Esophagus squamous epithelium (tissue), 5 donors: ENCODE measurements at regions of chr1 and their contacts with region 1.

Region 1: DNA sequence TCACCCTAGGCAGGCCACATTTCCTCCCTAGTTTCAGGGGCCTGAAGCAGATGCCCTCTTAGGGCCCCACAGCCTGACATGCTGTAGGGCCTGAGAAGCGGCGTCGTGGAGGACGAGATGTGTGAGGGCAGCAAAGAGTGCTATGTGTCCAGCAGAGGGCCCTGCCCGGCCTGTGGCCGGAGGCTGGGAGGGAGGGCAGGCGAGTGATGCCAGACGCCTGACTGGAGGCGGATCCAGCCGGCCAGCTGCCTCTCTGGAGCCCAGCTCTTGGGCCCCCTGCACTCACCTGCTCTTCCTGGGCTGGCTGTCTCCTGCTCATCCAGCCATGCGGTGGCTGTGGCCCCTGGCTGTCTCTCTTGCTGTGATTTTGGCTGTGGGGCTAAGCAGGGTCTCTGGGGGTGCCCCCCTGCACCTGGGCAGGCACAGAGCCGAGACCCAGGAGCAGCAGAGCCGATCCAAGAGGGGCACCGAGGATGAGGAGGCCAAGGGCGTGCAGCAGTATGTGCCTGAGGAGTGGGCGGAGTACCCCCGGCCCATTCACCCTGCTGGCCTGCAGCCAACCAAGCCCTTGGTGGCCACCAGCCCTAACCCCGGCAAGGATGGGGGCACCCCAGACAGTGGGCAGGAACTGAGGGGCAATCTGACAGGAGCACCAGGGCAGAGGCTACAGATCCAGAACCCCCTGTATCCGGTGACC is at the start of gene GPR37L1:
- DNase-seq: no peak
- H3K4me3 ChIP-seq: no peak within 1 kb of the TSS
- H3K27ac ChIP-seq: no peak within 1 kb of the TSS
- H3K4me1 ChIP-seq: peaks cover 0 to 11% (median 8%) of the 10 kb centered on the region in 3 donors
- H3K27me3 ChIP-seq: no peaks in the 10 kb centered on the region
- CTCF ChIP-seq: peak in 2 of 6 experiments; percentile 5 to 8
- POLR2A ChIP-seq: no peak
- total RNA-seq, gene GPR37L1: 0.09 TPM in 1 of 4 donors, not detected in the others

Region 2: DNA sequence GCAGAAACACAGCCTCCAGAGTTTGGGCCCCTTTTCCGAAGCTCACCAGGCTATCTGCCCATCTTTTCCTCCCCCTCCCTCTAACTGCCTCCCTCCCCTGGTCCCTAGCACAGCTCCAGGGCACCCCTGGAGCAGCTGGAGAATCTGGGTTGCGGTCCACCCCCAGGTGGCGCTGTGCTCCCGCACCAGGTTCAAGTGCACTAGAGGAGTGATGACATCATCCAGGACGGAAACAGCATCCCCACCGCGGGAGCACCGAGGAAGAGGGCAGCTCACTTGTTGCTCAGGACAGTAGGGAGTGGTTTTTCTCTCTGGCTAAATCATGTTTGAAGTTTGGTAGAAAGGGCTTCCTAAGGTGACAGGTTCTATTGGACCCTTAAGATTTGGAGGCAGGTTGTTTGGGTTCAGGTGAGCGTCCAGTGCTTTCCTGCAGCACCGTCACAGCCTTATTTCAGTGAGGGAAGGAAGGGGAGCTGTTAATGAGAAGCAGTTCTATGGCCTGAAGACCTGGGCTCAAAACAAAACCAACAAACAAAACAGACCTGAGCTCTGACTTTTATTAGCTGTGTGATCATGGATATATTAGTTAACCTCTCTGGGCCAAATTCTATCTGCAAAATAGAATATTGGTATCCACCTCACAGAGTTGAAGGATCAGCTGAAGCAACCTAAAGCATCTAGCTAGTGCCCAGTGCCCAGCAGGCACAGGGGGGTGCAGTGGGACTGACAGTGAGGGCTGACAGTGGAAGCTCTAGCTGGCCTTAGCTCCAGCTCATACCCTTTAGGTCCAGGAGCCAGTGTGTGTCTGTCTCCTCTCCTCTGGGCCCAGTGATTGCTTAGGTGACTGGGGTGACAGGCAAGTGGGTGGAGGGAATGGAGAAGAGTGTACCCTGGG is 226.6 kb before region 1 on chr1:
- intact Hi-C with region 1: loop called (anchors 10 kb)
- DNase-seq: no peak
- H3K4me3 ChIP-seq: no peak overlapping the region
- H3K27ac ChIP-seq: peak overlapping the region; percentile 7 to 85 (median 76)
- H3K4me1 ChIP-seq: peaks cover 0 to 72% (median 0%) of the 10 kb centered on the region in 3 donors
- H3K27me3 ChIP-seq: peaks cover 0 to 2% (median 0%) of the 10 kb centered on the region in 4 donors
- CTCF ChIP-seq: peak; percentile 91 to 97 (median 92)
- POLR2A ChIP-seq: no peak

Region 3: DNA sequence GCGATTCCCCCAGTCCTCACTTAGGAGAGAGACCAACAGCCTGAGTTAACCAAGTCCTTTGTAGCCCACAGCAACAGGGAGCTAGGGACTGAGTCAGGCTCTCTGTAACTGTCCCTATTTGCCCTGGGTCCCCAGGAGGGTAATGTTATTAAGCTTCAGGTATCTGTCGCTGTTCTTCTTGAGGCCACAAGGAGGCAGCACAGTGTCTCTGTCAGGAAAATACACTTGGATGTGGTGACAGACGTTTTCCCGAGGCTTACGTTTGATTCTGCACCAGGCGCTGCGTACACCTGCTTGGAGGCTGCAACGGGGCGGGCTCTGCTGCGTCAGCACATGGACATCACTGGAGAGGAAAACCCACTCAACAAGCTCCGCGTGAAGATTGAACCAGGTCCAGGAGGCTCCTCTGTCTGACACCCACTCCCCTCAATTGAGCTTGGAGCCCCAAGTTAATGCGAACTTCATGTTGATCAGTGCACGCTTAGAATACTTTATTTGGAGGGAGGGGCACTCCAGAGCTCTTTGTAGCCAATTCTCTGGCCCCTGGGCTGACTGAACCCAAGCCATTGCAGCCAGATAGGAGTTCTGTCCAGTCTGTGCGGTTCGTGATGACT is 123.1 kb before region 1 on chr1:
- intact Hi-C with region 1: loop called (anchors 5 kb)
- DNase-seq: no peak
- H3K4me3 ChIP-seq: no peak overlapping the region
- H3K27ac ChIP-seq: no peak overlapping the region
- H3K4me1 ChIP-seq: no peaks in the 10 kb centered on the region
- H3K27me3 ChIP-seq: no peaks in the 10 kb centered on the region
- CTCF ChIP-seq: peak; percentile 55 to 83 (median 74)
- POLR2A ChIP-seq: no peak